Posterior vena cava (tissue), 2 donors: ENCODE measurements at regions of chr20 and their contacts with region 1.

Region 1: GRCh38 chr20:15201602-15202001 is 864.2 kb upstream of the FLRT3 start:
- DNase-seq: no peak

Region 2: DNA sequence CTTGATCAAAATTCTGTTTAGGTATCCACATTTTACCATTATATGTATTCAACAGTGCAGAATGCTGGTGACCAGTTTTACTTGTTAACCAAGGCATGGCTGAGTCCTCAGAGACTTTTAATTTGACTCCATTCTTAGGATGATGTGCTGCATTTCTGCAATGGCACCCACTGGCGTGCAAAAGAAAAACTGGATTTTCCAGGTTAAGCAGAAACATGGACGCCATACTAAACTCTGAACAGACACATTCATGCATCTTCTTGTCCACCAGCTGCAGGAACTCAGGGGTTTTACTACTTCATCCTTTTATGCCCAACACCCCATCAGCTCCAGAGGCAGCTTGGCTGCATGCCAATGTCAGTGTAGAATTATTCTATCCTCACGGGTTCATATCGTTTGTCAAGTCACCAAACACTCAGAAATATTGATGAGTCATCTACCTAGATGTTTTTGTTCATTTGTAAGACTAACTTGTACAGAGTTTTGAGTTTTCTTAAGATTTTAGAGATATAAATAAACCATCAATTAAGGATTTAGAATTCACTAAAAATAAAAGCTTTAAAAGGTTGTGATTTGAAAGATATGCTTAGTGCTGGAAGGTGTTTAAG is 273.6 kb before region 1 on chr20:
- intact Hi-C with region 1: no loop called
- DNase-seq: no peak

Region 3: GRCh38 chr20:15278041-15278440 is 76.4 kb after region 1 on chr20:
- intact Hi-C with region 1: loop called in 1 of 2 experiments (anchors 2 kb)
- DNase-seq: no peak